ENCODE measurements at regions of chr10 and their contacts with region 1.

Region 1: DNA sequence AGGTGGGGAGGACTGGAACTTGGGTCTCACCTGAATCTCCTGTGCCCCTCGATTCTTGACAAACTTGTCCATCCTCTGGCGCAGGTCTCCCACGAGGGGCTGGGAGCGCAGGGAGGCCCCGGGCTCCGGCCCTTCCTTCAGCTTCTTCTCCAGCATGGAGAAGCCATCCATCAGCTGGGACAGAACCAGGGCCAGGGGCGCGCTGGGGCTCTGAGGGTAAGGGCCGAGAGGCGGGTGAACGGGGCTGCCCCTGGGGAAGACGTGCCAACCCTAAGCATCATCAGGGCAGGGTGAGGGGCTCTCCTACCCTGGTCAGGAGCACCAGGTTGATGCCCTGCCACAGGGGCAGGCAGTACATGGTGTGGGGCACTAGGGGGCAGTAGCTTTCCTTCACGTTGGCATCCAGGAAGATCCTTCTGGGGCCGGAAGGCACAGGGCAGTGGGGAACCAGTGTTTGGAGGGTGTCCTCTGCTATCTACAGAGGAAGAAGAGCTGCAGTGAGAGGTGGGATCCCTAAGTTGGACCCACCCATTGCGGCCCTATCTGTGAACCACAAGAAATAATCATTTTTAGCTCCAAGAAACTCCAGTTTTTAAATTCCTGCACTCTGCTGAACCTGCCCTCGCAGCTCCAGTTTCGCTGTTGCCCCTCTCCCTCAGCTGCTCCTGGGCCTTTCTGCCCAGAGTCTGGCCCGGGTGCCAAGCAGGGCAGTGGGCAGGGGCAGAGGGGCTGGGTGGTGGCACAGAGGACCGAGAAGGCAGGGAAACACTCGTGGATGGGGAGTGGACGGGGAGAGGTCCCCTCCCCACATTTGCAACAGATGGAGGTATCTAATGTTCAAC is 10.8 kb upstream of the PYROXD2 start:
- DNase-seq: no peak
- ATAC-seq: peak; percentile 97
- H3K4me3 ChIP-seq: no peak overlapping the region
- H3K27ac ChIP-seq: no peak overlapping the region
- H3K4me1 ChIP-seq: peaks cover 4% of the 10 kb centered on the region
- H3K27me3 ChIP-seq: no peaks in the 10 kb centered on the region
- CTCF ChIP-seq: peak; percentile 66 to 93 (median 78)
- EP300 ChIP-seq: no peak
- POLR2A ChIP-seq: no peak
- RAD21 ChIP-seq: peak; percentile 62

Region 2: GRCh38 chr10:98404571-98405359 is 21.0 kb before region 1 on chr10:
- CTCF ChIA-PET with region 1: interaction called, 16 read pairs
- POLR2A ChIA-PET with region 1: interaction called, 3 read pairs
- RAD21 ChIA-PET with region 1: no interaction called
- SMC1A ChIA-PET with region 1: no interaction called
- in situ Hi-C with region 1: no loop called
- intact Hi-C with region 1: no loop called
- DNase-seq: no peak
- ATAC-seq: peak; percentile 76
- H3K4me3 ChIP-seq: peak overlapping the region; percentile 37; the same call in 1 of the 2 replicates
- H3K27ac ChIP-seq: peak overlapping the region; percentile 72
- H3K4me1 ChIP-seq: peaks cover 29% of the 10 kb centered on the region
- H3K27me3 ChIP-seq: no peaks in the 10 kb centered on the region
- CTCF ChIP-seq: no peak
- EP300 ChIP-seq: no peak
- POLR2A ChIP-seq: no peak
- RAD21 ChIP-seq: no peak; the same call in 1 of the 2 replicates

Region 3: DNA sequence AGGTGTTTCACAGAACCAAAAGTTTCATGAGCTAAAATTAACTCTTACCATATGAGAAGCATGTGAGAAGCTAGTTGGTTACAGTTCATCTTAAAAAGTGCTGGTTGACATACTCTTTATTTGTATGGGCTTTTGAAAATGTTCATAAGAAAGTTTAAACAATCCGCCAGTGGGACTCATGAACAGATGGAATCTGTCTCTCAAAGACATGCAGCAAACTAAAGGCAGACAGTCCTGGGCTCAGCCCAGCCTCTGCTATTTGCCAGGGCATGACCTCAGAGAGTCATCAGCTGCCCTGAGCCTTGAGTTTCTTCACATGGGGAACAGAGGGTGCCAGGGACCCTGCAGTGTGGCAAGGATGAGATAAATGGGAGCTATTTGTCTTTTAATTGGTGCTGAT is 14.0 kb before region 1 on chr10:
- CTCF ChIA-PET with region 1: interaction called, 16 read pairs
- POLR2A ChIA-PET with region 1: interaction called, 4 read pairs
- RAD21 ChIA-PET with region 1: no interaction called
- SMC1A ChIA-PET with region 1: interaction called, 4 read pairs
- in situ Hi-C with region 1: no loop called
- intact Hi-C with region 1: no loop called
- DNase-seq: no peak
- ATAC-seq: no peak
- H3K4me3 ChIP-seq: no peak overlapping the region
- H3K27ac ChIP-seq: peak overlapping the region; percentile 25; the same call in 1 of the 2 replicates
- H3K4me1 ChIP-seq: peaks cover 28% of the 10 kb centered on the region
- H3K27me3 ChIP-seq: no peaks in the 10 kb centered on the region
- CTCF ChIP-seq: no peak
- EP300 ChIP-seq: no peak
- POLR2A ChIP-seq: no peak
- RAD21 ChIP-seq: no peak

Region 4: DNA sequence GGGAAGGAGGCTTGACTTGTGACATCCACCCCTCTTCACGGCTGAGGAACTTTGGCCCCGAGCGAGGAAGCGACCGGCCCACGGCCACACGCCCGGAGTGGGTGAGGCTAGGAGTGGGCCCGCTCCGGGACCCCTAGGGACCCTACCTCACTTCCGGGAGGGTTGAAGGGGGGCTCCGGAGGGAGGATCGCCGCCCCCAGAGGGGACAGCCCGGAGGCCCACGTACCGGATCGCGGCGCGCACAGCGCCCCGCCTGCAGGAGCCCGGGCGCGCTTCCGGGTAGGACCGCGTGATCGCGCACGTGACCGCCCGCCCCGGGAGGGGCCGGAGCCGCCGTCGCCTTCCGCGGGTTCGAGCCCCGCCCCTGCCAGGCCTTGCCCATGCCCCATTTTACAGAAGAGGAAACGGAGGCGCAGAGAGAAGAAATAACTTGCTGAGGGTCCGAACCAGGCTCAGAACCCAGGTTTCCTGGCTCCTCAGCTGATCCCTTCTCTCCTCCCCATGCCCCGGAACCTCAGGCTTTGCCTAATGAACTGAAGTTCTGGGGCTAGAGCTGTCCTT is 21.0 kb after region 1 on chr10 and contains the start of gene HPS1:
- CTCF ChIA-PET with region 1: interaction called, 22 read pairs
- POLR2A ChIA-PET with region 1: no interaction called
- RAD21 ChIA-PET with region 1: no interaction called
- SMC1A ChIA-PET with region 1: interaction called, 5 read pairs
- in situ Hi-C with region 1: no loop called
- intact Hi-C with region 1: no loop called
- DNase-seq: peak; percentile 42
- ATAC-seq: peak; percentile 92
- H3K4me3 ChIP-seq: peak within 1 kb of the TSS; percentile 84
- H3K27ac ChIP-seq: peak within 1 kb of the TSS; percentile 91
- H3K4me1 ChIP-seq: peaks cover 15% of the 10 kb centered on the region
- H3K27me3 ChIP-seq: no peaks in the 10 kb centered on the region
- CTCF ChIP-seq: no peak
- EP300 ChIP-seq: peak in 1 of 2 experiments; percentile 44; a peak in 1 of 4 replicates
- POLR2A ChIP-seq: peak; percentile 94
- RAD21 ChIP-seq: no peak
- polyA plus RNA-seq, gene HPS1: 27.9 to 35.8 TPM